Dorsolateral prefrontal cortex (tissue), 120 donors: ENCODE measurements at regions of chr5 and their contacts with region 1.

Region 1: DNA sequence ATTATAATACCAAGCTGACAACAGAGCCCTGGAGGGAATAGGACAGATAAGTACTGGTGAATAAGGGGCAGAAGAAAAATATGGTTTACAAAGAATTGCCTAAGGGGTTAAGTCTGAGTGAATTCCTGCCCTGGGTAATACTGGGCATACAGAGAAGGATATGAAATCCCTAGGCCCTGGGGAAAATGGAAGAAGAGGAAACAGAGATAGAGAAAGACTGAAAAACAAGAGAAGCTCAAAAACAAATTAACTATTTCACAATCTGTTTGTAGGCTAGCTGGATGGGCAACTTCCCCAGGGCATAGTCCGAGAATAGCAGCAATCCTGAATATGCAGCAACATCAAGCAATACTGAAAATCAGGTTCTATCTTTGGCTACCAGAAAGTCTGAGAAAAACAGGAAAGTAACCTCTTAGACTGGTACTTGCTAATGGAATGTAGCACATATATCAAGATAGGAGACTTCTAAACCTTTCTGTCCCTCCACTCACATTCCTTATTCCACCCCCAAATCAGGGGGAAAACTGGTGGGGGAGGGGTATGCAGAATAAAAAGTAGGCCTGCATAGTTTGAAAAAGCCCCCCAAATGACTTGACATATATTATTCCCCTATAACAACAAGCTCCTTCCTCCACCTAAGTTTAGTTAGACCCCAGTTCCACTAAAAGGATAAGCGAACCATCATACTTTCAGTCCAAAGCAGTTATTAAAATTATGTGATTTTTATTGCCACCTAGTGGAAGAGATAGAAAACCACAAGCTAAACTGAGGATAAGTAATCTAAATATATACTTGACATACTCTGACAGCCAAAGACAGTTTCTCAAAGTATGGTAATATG is 20.6 kb downstream of the SLC38A9 start:
- DNase-seq: no peak
- H3K4me3 ChIP-seq: peak overlapping the region in 24 of 59 donors; percentile 0 to 47 (median 22)
- H3K27ac ChIP-seq: peak overlapping the region in 14 of 59 donors; percentile 7 to 55 (median 32)
- H3K27me3 ChIP-seq: no peaks in the 10 kb centered on the region
- CTCF ChIP-seq: peak; percentile 67 to 92 (median 82)

Region 2: DNA sequence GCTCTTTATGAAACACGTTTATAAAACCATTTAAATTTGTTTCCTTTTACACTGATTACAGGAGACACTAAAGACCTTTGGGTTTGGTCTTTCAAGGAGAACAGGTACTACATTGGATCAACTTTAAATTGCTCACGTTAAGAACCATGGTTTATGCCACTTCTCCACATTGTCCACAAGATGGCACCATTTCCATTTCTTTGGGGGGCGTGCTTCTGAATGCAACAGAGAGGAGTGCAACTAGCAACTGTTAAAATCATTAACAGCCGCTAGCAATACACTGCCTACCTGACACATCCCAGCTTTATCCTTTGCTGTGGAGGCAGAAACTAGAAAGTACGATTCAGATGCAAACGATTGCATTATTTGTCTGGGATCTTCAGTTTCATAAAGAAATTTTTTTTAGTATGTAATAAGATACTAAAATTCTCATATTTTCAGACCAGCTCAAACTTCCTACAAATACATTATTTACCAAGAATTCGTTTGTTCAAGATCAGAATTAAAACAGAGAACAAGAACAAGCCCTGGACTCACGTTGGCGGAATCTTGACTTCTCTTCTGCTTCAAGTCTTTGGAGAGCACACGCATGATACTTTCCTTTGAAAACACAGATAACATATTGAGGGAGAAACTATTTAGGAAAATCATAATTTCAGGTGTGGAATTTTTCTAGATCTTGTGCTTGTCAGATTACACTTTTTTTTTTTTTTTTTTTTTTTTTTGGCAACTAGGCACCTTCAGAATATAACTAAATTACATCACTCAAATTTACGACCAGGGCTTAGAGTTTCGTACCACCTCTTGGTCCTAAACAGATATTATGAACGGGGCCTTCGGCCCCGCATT is 519.2 kb before region 1 on chr5:
- intact Hi-C with region 1: loop called in 1 of 2 experiments (anchors 5 kb)
- DNase-seq: peak in 3 of 10 donors; percentile 31 to 67 (median 44)
- H3K4me3 ChIP-seq: peak overlapping the region in 58 of 59 donors; percentile 28 to 72 (median 54)
- H3K27ac ChIP-seq: no peak overlapping the region
- H3K27me3 ChIP-seq: peaks cover 0 to 96% (median 76%) of the 10 kb centered on the region in 45 donors
- CTCF ChIP-seq: peak; percentile 65 to 92 (median 83)

Region 3: GRCh38 chr5:55338810-55339243 is 352.7 kb before region 1 on chr5:
- intact Hi-C with region 1: loop called (anchors 5 kb)
- DNase-seq: no peak
- H3K4me3 ChIP-seq: no peak overlapping the region
- H3K27ac ChIP-seq: no peak overlapping the region
- H3K27me3 ChIP-seq: no peaks in the 10 kb centered on the region
- CTCF ChIP-seq: no peak

Region 4: DNA sequence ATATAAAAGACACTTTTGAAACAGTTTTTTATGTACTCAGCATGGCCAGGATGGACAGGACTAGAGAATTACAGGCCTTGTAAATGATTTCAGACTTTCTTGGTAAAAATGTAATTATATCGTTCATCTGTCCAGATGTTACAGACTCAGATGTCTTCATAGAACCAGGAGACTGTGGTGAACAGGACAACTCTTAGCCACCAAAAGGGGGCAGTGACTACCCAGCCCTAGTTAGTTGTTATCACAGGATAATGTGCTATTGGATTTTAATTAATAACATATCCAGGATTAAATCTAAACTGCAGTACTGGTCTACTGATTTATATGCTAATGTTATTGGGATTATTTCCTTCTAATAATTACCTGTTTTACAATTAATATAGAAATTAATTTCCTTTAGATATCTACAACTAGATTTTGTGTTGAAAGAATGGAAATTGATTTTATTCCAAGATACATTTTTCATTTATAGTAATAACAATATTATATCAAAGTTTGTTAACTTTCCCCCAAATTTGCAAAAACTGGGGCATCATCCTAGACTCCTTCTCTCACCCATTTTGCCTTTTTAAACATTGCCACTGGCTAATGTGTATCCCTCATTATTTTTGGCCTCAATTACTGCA is 284.3 kb before region 1 on chr5:
- intact Hi-C with region 1: loop called (anchors 5 to 10 kb)
- DNase-seq: peak in 3 of 10 donors; percentile 18 to 57 (median 42)
- H3K4me3 ChIP-seq: no peak overlapping the region
- H3K27ac ChIP-seq: peak overlapping the region in 7 of 59 donors; percentile 6 to 40 (median 14)
- H3K27me3 ChIP-seq: no peaks in the 10 kb centered on the region
- CTCF ChIP-seq: peak in 55 of 56 donors; percentile 42 to 90 (median 73)

Region 5: GRCh38 chr5:55601204-55601618 is 90.3 kb before region 1 on chr5:
- intact Hi-C with region 1: loop called (anchors 2 to 5 kb)
- DNase-seq: peak; percentile 31 to 79 (median 68)
- H3K4me3 ChIP-seq: peak overlapping the region in 37 of 59 donors; percentile 1 to 54 (median 26)
- H3K27ac ChIP-seq: peak overlapping the region; percentile 32 to 99 (median 94)
- H3K27me3 ChIP-seq: no peaks in the 10 kb centered on the region
- CTCF ChIP-seq: peak in 3 of 56 donors; percentile 3 to 34 (median 13)